ENCODE measurements at regions of chr15 and their contacts with region 1.

Region 1: DNA sequence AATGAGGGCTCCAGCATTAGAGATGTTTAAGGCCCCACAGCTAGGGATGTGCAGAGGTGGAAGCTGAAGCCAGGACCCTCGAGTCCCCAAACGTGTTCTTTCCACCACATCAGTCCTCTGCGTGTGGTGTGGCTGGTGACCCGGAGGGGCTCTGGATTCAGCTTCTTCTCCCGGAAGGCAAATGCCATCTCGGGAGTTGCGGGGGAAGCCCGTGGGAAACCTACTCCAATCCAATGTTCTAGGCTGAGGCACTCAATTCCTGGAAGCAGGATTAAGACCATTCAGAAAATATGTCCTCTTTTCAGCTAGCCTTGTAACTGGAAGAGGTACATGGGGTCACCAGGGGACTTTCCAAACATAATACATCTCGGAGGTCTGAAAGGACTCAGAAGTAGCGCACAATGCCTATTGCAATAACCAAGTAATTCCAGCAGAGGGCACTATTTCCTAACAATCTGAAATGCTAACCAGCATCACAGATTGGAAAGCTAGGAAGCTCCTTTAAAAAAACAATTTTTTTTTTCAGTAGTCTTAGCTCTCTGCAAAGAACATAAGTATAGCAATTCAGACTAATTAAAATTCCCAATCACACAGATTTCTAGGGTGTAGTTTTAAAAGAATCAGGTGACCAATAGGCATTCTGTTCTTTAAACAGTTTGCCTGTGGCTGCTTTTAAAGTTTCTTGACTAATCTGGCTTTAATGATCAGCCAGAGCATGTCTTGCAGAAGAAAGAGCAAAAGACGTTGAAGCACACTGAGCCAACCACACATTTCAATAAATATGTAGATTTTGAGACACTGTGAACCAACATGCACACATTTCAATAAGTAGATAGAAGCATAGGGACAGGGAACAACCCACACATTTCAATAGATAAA is 36.1 kb downstream of the BNC1 start:
- DNase-seq: peak; percentile 57
- ATAC-seq: no peak
- H3K4me3 ChIP-seq: no peak overlapping the region
- H3K4me3 Mint-ChIP-seq: no peak overlapping the region
- H3K27ac ChIP-seq: no peak overlapping the region
- H3K27ac Mint-ChIP-seq: no peak overlapping the region
- H3K4me1 ChIP-seq: no peaks in the 10 kb centered on the region
- H3K4me1 Mint-ChIP-seq: no peaks in the 10 kb centered on the region
- H3K27me3 ChIP-seq: peaks cover 0 to 15% (median 2%) of the 10 kb centered on the region in 4 experiments
- H3K27me3 Mint-ChIP-seq: peaks cover 25% of the 10 kb centered on the region
- CTCF ChIP-seq: peak; percentile 98

Region 2: DNA sequence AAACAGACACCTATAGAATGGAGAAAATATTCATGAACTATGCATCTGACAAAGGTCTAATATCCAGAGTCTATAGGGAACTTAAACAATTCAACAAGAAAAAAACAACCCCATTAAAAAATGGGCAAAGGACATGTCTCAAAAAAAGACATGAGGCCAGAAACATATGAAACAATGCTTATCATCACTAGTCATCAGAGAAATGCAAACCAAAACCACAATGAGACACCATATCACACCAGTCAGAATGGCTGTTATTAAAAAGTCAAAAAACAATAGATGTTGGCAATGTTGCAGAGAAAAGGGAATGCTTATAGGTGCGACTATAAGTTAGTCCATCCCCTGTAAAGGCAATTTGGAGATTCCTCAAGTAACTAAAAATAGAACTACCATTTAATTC is 29.4 kb before region 1 on chr15:
- CTCF ChIA-PET with region 1: no interaction called
- POLR2A ChIA-PET with region 1: no interaction called
- intact Hi-C with region 1: no loop called
- DNase-seq: no peak
- ATAC-seq: no peak
- H3K4me3 ChIP-seq: no peak overlapping the region
- H3K4me3 Mint-ChIP-seq: no peak overlapping the region
- H3K27ac ChIP-seq: no peak overlapping the region
- H3K27ac Mint-ChIP-seq: no peak overlapping the region
- H3K4me1 ChIP-seq: no peaks in the 10 kb centered on the region
- H3K4me1 Mint-ChIP-seq: no peaks in the 10 kb centered on the region
- H3K27me3 ChIP-seq: peaks cover 0 to 12% (median 2%) of the 10 kb centered on the region in 4 experiments
- H3K27me3 Mint-ChIP-seq: peaks cover 35% of the 10 kb centered on the region
- CTCF ChIP-seq: no peak

Region 3: DNA sequence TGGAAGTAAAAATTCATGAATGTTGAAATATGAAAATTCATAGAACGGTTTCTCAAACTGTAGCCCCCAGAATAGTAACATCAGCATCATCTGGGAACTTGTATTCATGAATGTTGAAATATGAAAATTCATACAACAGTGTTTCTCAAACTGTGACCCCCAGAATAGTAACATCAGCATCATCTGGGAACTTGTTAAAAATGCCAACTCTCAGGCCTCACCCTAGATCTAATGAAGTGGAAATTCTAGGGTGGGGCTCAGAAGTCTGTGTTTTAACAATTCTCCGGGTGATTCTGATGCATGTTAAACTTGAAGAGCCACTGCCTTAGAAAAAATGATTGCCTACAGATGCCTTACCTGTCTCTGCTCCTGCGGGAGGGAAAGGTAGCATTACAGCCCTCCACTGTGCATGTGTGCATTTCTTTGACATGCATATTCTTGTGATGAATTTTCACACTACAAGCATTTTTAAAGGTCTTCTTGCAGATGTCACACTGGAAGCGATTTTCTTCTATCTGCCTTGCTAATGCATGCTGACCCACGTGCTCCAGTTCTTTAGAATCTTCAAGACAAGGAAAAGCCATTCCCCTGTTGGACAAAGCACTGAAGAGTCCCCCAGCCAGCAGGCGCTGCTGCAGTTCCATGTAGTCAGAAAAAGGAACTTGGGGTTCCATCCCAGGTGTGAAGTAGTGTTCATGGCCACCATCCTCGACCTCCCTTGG is 14.4 kb after region 1 on chr15:
- CTCF ChIA-PET with region 1: interaction called, 21 read pairs
- POLR2A ChIA-PET with region 1: no interaction called
- intact Hi-C with region 1: no loop called
- DNase-seq: no peak
- ATAC-seq: no peak
- H3K4me3 ChIP-seq: no peak overlapping the region
- H3K4me3 Mint-ChIP-seq: no peak overlapping the region
- H3K27ac ChIP-seq: no peak overlapping the region
- H3K27ac Mint-ChIP-seq: no peak overlapping the region
- H3K4me1 ChIP-seq: no peaks in the 10 kb centered on the region
- H3K4me1 Mint-ChIP-seq: no peaks in the 10 kb centered on the region
- H3K27me3 ChIP-seq: peaks cover 0 to 5% (median 0%) of the 10 kb centered on the region in 4 experiments
- H3K27me3 Mint-ChIP-seq: peaks cover 22% of the 10 kb centered on the region
- CTCF ChIP-seq: no peak

Region 4: DNA sequence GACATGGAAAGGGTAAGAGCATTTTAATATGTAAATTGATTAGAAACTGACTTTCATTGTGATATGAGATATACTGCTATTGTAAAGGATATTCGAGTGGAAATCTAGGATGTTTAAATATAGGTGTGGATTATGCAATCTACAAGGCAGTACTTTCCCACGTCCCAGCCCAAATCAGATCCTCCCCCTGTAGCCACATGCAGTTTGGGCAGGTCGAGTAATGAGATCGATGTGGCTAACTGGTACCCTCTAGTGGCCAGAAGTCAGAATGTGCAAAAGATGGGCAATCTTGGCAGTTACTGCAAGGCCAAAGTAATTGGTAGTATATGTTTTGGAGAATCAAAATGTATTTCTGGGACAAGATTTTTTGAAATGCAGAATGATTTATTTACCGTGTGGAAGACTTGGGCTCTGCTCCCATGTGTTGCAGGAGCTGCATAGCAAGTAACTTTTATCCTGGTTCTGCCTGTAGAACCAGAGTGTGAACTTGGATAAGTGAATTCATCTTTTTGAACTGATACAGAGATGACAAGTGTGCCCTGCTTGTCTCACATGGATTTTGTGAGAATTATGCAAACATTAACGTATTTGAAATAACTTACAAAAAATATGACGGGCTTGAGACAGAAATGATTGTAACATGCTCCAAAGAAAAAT is 311.0 kb after region 1 on chr15:
- CTCF ChIA-PET with region 1: interaction called, 3 read pairs
- POLR2A ChIA-PET with region 1: no interaction called
- intact Hi-C with region 1: loop called (anchors 10 kb)
- DNase-seq: peak; percentile 44
- ATAC-seq: peak; percentile 31
- H3K4me3 ChIP-seq: no peak overlapping the region
- H3K4me3 Mint-ChIP-seq: no peak overlapping the region
- H3K27ac ChIP-seq: no peak overlapping the region
- H3K27ac Mint-ChIP-seq: no peak overlapping the region
- H3K4me1 ChIP-seq: no peaks in the 10 kb centered on the region
- H3K4me1 Mint-ChIP-seq: no peaks in the 10 kb centered on the region
- H3K27me3 ChIP-seq: no peaks in the 10 kb centered on the region
- H3K27me3 Mint-ChIP-seq: peaks cover 20% of the 10 kb centered on the region
- CTCF ChIP-seq: peak; percentile 86

Measured in B cell (primary cell).